CD8-positive, alpha-beta T cell (primary cell): ENCODE measurements at regions of chr19 and their contacts with region 1.

Region 1: GRCh38 chr19:20077791-20078463 is at the start of gene ZNF90:
- DNase-seq: peak; percentile 63 to 95 (median 84)
- ATAC-seq: peak; percentile 99
- H3K4me3 ChIP-seq: peak within 1 kb of the TSS; percentile 67 to 76
- H3K4me3 Mint-ChIP-seq: peak within 1 kb of the TSS; percentile 91
- H3K27ac ChIP-seq: no peak within 1 kb of the TSS
- H3K27ac Mint-ChIP-seq: no peak within 1 kb of the TSS
- H3K4me1 ChIP-seq: peaks cover 10% of the 10 kb centered on the region
- H3K4me1 Mint-ChIP-seq: peaks cover 22% of the 10 kb centered on the region
- H3K27me3 ChIP-seq: no peaks in the 10 kb centered on the region
- H3K27me3 Mint-ChIP-seq: no peaks in the 10 kb centered on the region
- CTCF ChIP-seq: no peak
- total RNA-seq, gene ZNF90: 1.9 to 2.2 TPM

Region 2: DNA sequence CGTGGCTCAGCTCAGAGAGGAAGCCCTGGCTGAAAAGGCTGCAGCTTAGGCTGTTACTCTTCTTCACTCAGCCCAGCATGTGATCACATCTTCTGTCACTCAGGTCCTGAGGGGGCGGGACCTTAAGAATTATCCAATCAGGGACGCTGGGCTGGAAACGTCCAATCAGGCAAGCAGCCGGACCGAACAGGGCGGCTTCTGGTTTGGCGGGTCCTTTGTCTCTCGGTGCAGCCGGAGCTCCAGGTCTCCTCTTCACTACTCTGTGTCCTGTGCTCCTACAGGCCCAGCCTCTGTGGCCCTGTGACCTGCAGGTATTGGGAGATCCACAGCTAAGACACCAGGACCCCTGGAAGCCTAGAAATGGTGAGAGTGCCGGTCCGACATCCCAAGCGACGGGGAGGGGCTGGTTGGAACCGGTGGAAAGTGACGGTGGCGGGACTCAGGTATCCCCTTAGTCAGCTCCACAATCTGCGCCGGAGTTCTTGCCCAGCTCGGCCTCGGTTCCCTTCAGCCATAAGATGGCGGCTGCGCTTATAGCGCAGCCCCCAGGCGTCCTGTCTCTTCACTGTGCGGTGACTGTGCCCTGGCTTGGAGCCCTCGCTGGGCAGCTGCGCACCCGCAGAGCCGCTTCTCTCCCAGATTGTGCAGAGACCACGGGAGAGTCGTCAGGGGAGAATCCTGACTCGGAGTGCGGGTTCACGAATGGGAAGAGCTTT is 177.0 kb before region 1 on chr19 and contains the start of gene ZNF93:
- CTCF ChIA-PET with region 1: no interaction called
- POLR2A ChIA-PET with region 1: no interaction called
- intact Hi-C with region 1: no loop called
- DNase-seq: peak; percentile 83 to 95 (median 91)
- ATAC-seq: peak; percentile 97
- H3K4me3 ChIP-seq: peak within 1 kb of the TSS; percentile 86 to 95
- H3K4me3 Mint-ChIP-seq: peak within 1 kb of the TSS; percentile 94
- H3K27ac ChIP-seq: peak within 1 kb of the TSS; percentile 46 to 75
- H3K27ac Mint-ChIP-seq: peak within 1 kb of the TSS; percentile 91
- H3K4me1 ChIP-seq: peaks cover 10% of the 10 kb centered on the region
- H3K4me1 Mint-ChIP-seq: peaks cover 38% of the 10 kb centered on the region
- H3K27me3 ChIP-seq: no peaks in the 10 kb centered on the region
- H3K27me3 Mint-ChIP-seq: no peaks in the 10 kb centered on the region
- CTCF ChIP-seq: no peak
- total RNA-seq, gene ZNF93: 5.9 to 6.8 TPM

Region 3: GRCh38 chr19:20051841-20052768 is 25.8 kb before region 1 on chr19:
- CTCF ChIA-PET with region 1: interaction called, 4 read pairs
- POLR2A ChIA-PET with region 1: interaction called, 6 read pairs
- intact Hi-C with region 1: loop called (anchors 1 kb)
- DNase-seq: peak; percentile 10 to 78 (median 56)
- ATAC-seq: peak; percentile 93
- H3K4me3 ChIP-seq: peak overlapping the region; percentile 80 to 87
- H3K4me3 Mint-ChIP-seq: peak overlapping the region; percentile 99
- H3K27ac ChIP-seq: peak overlapping the region; percentile 37 to 72
- H3K27ac Mint-ChIP-seq: peak overlapping the region; percentile 91
- H3K4me1 ChIP-seq: peaks cover 6% of the 10 kb centered on the region
- H3K4me1 Mint-ChIP-seq: peaks cover 13% of the 10 kb centered on the region
- H3K27me3 ChIP-seq: peaks cover 0 to 2% of the 10 kb centered on the region in 2 experiments
- H3K27me3 Mint-ChIP-seq: peaks cover 3% of the 10 kb centered on the region
- CTCF ChIP-seq: no peak

Region 4: GRCh38 chr19:20237761-20238623 is 160.1 kb after region 1 on chr19:
- CTCF ChIA-PET with region 1: no interaction called
- POLR2A ChIA-PET with region 1: no interaction called
- intact Hi-C with region 1: loop called in 1 of 2 experiments (anchors 5 kb)
- DNase-seq: peak; percentile 74 to 92 (median 86)
- ATAC-seq: peak; percentile 97
- H3K4me3 ChIP-seq: peak overlapping the region; percentile 77 to 87
- H3K4me3 Mint-ChIP-seq: peak overlapping the region; percentile 98
- H3K27ac ChIP-seq: peak overlapping the region; percentile 50 to 56
- H3K27ac Mint-ChIP-seq: peak overlapping the region; percentile 91
- H3K4me1 ChIP-seq: peaks cover 6% of the 10 kb centered on the region
- H3K4me1 Mint-ChIP-seq: peaks cover 10% of the 10 kb centered on the region
- H3K27me3 ChIP-seq: no peaks in the 10 kb centered on the region
- H3K27me3 Mint-ChIP-seq: no peaks in the 10 kb centered on the region
- CTCF ChIP-seq: no peak